ENCODE measurements at regions of chr2 and their contacts with region 1.

Region 1: DNA sequence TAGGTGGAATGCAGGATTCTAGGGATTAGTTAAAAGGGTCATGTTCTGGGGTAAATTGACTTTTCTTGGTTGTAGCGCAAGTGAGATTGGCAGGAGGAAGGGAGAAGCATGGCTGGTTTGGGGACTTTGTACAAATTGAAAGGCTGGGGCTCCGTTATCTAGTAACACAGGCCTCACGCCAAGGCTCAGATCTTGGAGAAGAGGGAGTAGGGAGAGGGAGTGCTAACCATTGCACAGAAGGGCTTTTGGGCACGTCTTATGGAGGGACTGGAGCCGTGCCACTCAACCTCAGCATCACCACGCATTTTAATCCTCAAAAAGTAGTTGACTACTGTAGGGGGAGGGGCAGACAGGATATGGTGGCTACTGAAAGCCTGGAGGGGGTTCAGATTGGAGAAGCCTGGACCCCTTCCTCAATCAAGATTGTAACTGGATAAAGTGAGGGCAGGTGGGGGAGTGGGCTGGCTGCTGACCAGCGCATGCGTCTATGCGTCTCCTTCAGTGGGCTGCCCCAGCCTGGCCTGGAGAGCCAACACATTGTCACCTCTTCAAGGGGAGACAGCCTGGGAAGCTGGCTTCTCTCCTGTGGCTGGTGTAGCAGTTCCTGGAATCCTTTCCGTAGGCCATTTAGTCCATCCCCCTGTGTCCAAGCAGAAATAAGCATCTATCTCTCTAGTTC is 14.3 kb downstream of the IGFBP5 start:
- DNase-seq: no peak
- H3K4me3 Mint-ChIP-seq: no peak overlapping the region
- H3K27ac Mint-ChIP-seq: no peak overlapping the region
- H3K4me1 Mint-ChIP-seq: peaks cover 28% of the 10 kb centered on the region
- H3K27me3 Mint-ChIP-seq: peaks cover 8% of the 10 kb centered on the region
- CTCF ChIP-seq: no peak

Region 2: GRCh38 chr2:217510771-217511291 is 829.7 kb after region 1 on chr2:
- CTCF ChIA-PET with region 1: interaction called, 5 read pairs
- intact Hi-C with region 1: loop called (anchors 1 kb)
- DNase-seq: peak; percentile 76
- H3K4me3 Mint-ChIP-seq: no peak overlapping the region
- H3K27ac Mint-ChIP-seq: peak overlapping the region; percentile 90
- H3K4me1 Mint-ChIP-seq: peaks cover 39% of the 10 kb centered on the region
- H3K27me3 Mint-ChIP-seq: no peaks in the 10 kb centered on the region
- CTCF ChIP-seq: peak; percentile 79

Measured in Calu3 (cell line).